ENCODE measurements at regions of chr16 and their contacts with region 1.

Region 1: GRCh38 chr16:24516900-24517669 is 22.3 kb upstream of the RBBP6 start:
- DNase-seq: peak; percentile 89
- H3K4me3 ChIP-seq: no peak overlapping the region
- H3K27ac ChIP-seq: no peak overlapping the region
- H3K4me1 ChIP-seq: no peaks in the 10 kb centered on the region
- H3K27me3 ChIP-seq: peaks cover 0 to 1% of the 10 kb centered on the region in 2 experiments
- CTCF ChIP-seq: peak; percentile 89 to 93
- POLR2A ChIP-seq: no peak

Region 2: GRCh38 chr16:24539291-24539849 is 22.3 kb after region 1 on chr16 and contains the start of gene RBBP6:
- CTCF ChIA-PET with region 1: interaction called, 40 read pairs
- POLR2A ChIA-PET with region 1: interaction called, 4 read pairs
- dilution Hi-C with region 1: no loop called
- intact Hi-C with region 1: loop called (anchors 1 kb)
- DNase-seq: peak; percentile 98
- H3K4me3 ChIP-seq: peak within 1 kb of the TSS; percentile 80 to 94 (median 88)
- H3K27ac ChIP-seq: peak within 1 kb of the TSS; percentile 96
- H3K4me1 ChIP-seq: peaks cover 36% of the 10 kb centered on the region
- H3K27me3 ChIP-seq: no peaks in the 10 kb centered on the region
- CTCF ChIP-seq: peak in 1 of 2 donors; percentile 28
- POLR2A ChIP-seq: peak; percentile 93
- total RNA-seq, gene RBBP6: 49.2 and 52.1 TPM in 2 replicates

Region 3: GRCh38 chr16:24552705-24553246 is 35.7 kb after region 1 on chr16:
- CTCF ChIA-PET with region 1: interaction called, 23 read pairs
- POLR2A ChIA-PET with region 1: no interaction called
- dilution Hi-C with region 1: no loop called
- intact Hi-C with region 1: no loop called
- DNase-seq: no peak
- H3K4me3 ChIP-seq: no peak overlapping the region
- H3K27ac ChIP-seq: no peak overlapping the region
- H3K4me1 ChIP-seq: peaks cover 11% of the 10 kb centered on the region
- H3K27me3 ChIP-seq: no peaks in the 10 kb centered on the region
- CTCF ChIP-seq: no peak
- POLR2A ChIP-seq: no peak

Region 4: DNA sequence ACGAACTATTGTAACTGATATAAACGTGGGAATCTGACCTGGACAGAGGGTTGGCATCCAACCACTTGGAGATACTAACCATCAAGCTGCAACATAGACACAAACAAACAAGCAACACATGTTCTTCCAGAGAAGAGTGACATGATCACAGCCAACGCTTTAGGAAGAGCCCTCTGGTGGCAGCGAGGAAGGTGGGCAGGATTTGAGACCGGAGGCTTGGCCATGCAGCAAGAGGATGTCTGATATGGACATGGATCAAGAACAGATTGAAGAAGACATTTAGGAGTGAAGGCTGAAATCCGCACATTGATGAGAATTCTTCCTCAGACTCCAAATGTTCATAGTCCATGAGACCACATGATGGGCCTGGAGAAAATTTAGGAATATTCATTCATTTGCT is 172.1 kb after region 1 on chr16:
- CTCF ChIA-PET with region 1: interaction called, 3 read pairs
- POLR2A ChIA-PET with region 1: no interaction called
- dilution Hi-C with region 1: no loop called
- intact Hi-C with region 1: loop called (anchors 1 kb)
- DNase-seq: peak; percentile 42
- H3K4me3 ChIP-seq: no peak overlapping the region
- H3K27ac ChIP-seq: no peak overlapping the region
- H3K4me1 ChIP-seq: peaks cover 14% of the 10 kb centered on the region
- H3K27me3 ChIP-seq: no peaks in the 10 kb centered on the region
- CTCF ChIP-seq: peak; percentile 56
- POLR2A ChIP-seq: no peak

Region 5: DNA sequence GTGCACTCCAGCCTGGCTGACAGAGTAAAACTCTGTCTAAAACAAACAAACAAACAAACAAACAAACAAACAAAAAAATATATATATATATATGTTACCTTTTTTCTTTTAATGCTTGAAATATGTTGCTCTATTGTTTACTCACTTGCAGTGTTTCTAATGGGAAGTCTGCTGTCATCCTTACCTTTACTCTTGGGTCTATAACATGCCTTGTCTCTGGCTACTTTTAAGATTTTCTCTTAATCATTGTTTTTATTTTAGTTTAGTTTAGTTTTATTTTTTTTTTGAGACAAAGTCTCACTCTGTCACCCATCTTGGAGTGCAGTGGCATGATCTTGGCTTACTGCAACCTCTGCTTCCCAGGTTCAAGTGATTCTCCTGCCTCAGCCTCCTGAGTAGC is 196.3 kb after region 1 on chr16:
- CTCF ChIA-PET with region 1: no interaction called
- POLR2A ChIA-PET with region 1: no interaction called
- dilution Hi-C with region 1: no loop called
- intact Hi-C with region 1: no loop called
- DNase-seq: no peak
- H3K4me3 ChIP-seq: no peak overlapping the region
- H3K27ac ChIP-seq: no peak overlapping the region
- H3K4me1 ChIP-seq: no peaks in the 10 kb centered on the region
- H3K27me3 ChIP-seq: peaks cover 0 to 2% of the 10 kb centered on the region in 2 experiments
- CTCF ChIP-seq: no peak
- POLR2A ChIP-seq: no peak

Region 6: GRCh38 chr16:24800586-24800985 is 283.5 kb after region 1 on chr16:
- CTCF ChIA-PET with region 1: interaction called, 29 read pairs
- POLR2A ChIA-PET with region 1: no interaction called
- dilution Hi-C with region 1: no loop called
- intact Hi-C with region 1: loop called (anchors 5 kb)
- DNase-seq: peak; percentile 35
- H3K4me3 ChIP-seq: no peak overlapping the region
- H3K27ac ChIP-seq: no peak overlapping the region
- H3K4me1 ChIP-seq: no peaks in the 10 kb centered on the region
- H3K27me3 ChIP-seq: no peaks in the 10 kb centered on the region
- CTCF ChIP-seq: peak; percentile 21 to 24
- POLR2A ChIP-seq: no peak